Heart right ventricle (tissue), 16 donors: ENCODE measurements at regions of chr5 and their contacts with region 1.

Region 1: DNA sequence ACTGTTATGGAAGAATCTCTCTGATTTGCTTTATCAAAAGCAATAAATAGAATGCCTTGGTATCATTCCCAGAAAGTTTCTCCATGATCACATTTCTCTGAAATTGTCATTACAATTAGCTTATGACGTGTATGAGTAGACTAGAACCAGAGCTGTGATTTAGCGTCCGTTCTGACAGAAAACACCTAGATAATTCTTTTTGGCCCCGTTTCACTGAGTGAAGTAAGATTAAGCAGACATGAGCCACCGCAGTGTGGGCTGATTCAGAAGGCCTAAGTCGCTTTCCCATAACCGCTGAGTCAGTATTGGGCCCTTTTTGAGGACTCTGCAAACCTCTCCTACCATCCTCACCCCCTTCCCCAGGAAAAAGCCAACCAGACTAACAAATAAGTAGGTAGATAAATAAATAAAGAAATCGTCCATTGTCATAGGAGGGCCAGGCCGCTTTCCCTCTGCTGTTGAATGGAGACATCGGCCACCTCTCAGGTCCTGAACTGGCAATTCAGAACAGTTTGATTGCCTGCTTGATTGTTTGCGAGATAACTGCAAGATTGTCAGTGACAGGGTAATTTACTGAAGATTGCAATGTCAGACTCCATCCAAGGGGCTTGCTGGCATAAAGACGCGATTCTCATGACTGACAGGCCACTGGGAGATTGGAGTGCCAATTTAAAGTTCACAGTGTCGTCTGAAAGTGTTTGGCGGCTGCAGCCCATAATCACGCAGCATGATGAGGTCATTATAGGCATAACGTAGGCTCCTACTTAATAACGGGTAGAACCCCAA is 105.0 kb upstream of the WWC1 start:
- DNase-seq: no peak
- ATAC-seq: peak in 7 of 8 donors; percentile 35 to 90 (median 80)
- H3K4me3 ChIP-seq: no peak overlapping the region
- H3K27ac ChIP-seq: peak overlapping the region; percentile 27 to 93 (median 75)
- H3K4me1 ChIP-seq: peaks cover 0 to 27% (median 19%) of the 10 kb centered on the region in 9 donors
- H3K27me3 ChIP-seq: no peaks in the 10 kb centered on the region
- CTCF ChIP-seq: no peak

Region 2: GRCh38 chr5:168104811-168105481 is 81.5 kb before region 1 on chr5:
- intact Hi-C with region 1: no loop called
- DNase-seq: no peak
- ATAC-seq: peak in 1 of 8 donors; percentile 19
- H3K4me3 ChIP-seq: no peak overlapping the region
- H3K27ac ChIP-seq: peak overlapping the region in 2 of 10 donors; percentile 10 to 39
- H3K4me1 ChIP-seq: peaks cover 0 to 27% (median 0%) of the 10 kb centered on the region in 9 donors
- H3K27me3 ChIP-seq: no peaks in the 10 kb centered on the region
- CTCF ChIP-seq: no peak

Region 3: DNA sequence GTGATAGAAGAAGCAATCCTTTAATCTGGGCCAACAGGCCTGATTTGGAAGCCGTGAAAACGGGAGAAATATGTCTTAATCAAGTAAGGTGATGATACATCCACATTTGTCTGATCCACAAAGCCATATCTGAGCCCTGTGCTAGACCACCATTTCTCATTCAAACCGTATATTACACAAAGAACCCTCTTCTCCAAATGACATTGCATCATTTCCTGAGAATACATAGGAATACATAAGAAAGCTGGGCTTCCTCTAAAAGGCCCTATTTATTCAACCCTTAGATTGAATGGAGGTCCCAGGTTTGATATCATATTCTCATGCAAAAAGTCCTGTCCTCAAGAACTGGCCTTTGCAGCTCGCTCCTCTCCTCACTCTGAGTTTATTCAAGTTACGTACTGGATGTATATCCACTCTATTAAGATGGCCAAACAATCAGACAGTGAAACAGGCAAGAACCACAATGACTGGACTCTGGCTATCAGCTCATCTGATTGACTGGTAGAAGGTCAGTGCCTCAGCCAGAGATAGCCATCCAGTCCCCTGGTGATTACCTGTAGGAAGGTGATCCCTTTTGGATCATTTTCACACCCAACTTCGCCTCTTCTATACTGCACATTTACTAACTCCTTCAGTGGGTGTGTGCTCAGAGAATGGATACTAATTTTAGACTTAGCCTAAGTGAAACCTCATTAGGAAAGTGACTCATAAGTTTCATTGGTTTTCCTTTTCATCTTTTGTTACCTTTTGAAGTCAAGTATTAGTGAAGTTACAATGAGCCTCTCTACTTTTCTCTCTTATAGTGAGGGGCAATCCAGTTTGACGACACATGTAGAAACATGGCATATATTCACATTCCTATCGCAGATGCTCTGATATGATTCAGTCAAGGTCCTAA is 62.6 kb before region 1 on chr5:
- intact Hi-C with region 1: loop called in 1 of 10 experiments (anchors 10 kb)
- DNase-seq: no peak
- ATAC-seq: peak in 2 of 8 donors; percentile 28 to 40
- H3K4me3 ChIP-seq: no peak overlapping the region
- H3K27ac ChIP-seq: peak overlapping the region in 5 of 10 donors; percentile 11 to 44 (median 25)
- H3K4me1 ChIP-seq: peaks cover 7 to 48% (median 19%) of the 10 kb centered on the region in 9 donors
- H3K27me3 ChIP-seq: no peaks in the 10 kb centered on the region
- CTCF ChIP-seq: no peak

Region 4: DNA sequence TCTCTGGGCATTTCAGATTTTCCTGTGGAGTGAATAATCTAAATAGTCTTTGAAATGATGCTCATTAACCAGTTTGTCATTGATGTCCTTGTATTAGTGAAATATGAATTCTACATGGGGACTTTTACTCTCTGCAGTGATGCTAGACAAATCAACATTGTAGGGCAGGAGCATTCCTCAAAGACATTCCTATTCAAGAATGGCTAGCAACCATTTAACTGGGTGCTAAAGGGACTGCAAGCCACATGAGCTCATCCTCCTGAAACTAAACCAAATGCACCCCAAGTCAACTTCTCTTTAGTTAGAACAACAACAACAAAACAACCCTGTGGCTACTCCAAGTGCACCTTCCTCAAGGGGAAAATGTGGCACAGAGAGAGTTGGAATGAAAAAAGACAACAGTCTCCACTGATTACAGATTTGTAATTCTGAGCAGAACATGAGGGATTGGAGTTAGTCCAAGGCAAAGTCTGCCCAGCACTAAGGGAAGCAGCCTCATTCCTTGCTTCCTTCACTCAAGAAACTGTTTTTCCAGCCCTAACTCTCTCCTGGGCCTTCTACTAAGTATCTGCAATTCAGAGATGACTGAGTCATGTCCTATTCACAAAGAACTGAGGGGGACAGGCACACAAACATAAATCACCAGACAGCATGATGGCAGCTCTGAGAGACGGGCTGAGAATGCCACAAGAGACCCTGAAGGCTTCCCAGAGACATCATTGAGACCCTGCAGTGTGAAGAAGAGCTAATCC is 22.9 kb after region 1 on chr5:
- intact Hi-C with region 1: loop called in 1 of 10 experiments (anchors 1 kb)
- DNase-seq: no peak
- ATAC-seq: peak in 2 of 8 donors; percentile 7 to 20
- H3K4me3 ChIP-seq: no peak overlapping the region
- H3K27ac ChIP-seq: peak overlapping the region in 6 of 10 donors; percentile 5 to 63 (median 31)
- H3K4me1 ChIP-seq: peaks cover 0 to 17% (median 7%) of the 10 kb centered on the region in 9 donors
- H3K27me3 ChIP-seq: no peaks in the 10 kb centered on the region
- CTCF ChIP-seq: no peak

Region 5: DNA sequence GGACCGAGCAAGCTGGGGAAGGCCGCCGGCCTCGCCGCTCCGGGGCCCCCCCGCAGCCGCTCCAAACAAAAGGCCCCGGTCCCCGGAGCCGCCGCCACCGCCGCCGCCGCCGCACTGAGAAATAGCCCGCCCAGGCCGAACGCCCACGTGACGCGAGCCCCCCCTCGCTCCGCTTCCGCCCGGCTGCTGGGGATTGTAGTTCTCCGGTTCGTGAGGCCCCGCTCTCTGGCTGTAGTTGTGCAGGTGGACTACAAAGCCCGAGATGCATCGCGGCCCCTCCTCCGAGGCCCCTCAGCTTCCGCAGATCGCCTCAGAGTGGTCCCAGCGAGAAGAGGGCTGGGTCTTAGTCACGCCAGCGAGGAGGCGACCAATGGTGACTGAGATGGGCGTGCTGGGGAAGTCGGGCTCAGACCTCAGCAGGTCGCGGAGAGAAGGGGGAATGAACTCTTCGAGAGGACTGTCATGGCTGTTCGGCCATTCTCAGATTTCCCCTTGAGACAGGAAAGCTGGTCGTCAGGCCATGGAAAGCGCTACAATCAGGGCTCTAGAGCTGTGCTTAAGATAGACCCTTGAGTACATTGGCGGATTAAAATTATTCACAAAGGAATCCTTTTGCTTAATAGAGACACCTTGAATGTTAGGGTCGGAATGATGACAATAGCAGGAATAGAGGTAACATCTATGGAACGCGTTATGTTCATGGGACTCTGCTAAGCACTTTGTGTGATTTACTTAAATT is 393.2 kb after region 1 on chr5:
- intact Hi-C with region 1: no loop called
- DNase-seq: peak; percentile 97 to 99
- ATAC-seq: peak; percentile 98 to 99 (median 99)
- H3K4me3 ChIP-seq: peak overlapping the region; percentile 76 to 99 (median 92)
- H3K27ac ChIP-seq: peak overlapping the region; percentile 89 to 99 (median 96)
- H3K4me1 ChIP-seq: peaks cover 0 to 47% (median 37%) of the 10 kb centered on the region in 9 donors
- H3K27me3 ChIP-seq: no peaks in the 10 kb centered on the region
- CTCF ChIP-seq: no peak